CD8-positive, alpha-beta T cell (primary cell): ENCODE measurements at regions of chr12 and their contacts with region 1.

Region 1: DNA sequence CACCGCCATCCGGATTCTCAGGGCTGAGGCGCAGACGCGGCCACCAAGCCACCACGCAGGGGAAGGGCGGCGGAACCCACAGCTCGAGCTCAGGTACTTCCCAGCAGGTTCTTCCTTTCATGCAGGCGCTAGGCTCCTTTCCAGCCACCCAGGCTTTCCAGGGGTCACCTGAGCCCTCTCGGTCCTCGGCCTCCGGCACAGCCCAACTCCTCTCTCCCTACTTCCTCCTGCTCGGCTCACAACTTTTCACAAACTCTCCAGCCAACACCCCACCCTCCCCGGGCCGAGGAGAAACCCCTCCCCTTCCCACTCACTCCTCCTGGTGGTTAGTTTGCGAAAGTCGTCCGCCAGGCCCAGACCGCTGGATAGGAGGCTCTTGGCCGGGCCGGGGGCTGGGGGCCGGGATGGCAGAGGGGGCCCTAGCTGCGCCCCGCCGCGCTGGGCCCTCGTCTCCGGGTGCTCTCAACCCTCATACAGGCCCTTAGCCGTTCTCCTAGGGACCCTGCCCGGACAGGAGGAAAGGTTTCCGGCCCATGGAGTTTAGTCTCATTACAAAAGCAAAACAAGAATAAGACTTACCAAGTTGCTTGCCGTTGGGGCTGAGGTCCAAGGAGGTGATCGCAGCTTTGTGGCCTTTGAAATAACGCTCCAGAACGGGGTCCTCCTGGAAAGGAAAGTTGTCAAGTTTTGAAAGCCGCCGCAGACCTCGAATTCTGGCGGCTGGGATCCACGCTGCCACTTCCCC is at the start of gene GALNT4:
- DNase-seq: peak; percentile 45 to 88 (median 74)
- ATAC-seq: peak; percentile 70
- H3K4me3 ChIP-seq: peak within 1 kb of the TSS; percentile 78 to 93
- H3K4me3 Mint-ChIP-seq: peak within 1 kb of the TSS; percentile 92
- H3K27ac ChIP-seq: peak within 1 kb of the TSS; percentile 70 to 86
- H3K27ac Mint-ChIP-seq: peak within 1 kb of the TSS; percentile 87
- H3K4me1 ChIP-seq: peaks cover 28% of the 10 kb centered on the region
- H3K4me1 Mint-ChIP-seq: peaks cover 61% of the 10 kb centered on the region
- H3K27me3 ChIP-seq: no peaks in the 10 kb centered on the region
- H3K27me3 Mint-ChIP-seq: no peaks in the 10 kb centered on the region
- CTCF ChIP-seq: peak; percentile 41
- total RNA-seq, gene GALNT4: 4.6 to 5.3 TPM

Region 2: GRCh38 chr12:88035271-88035906 is 1489.3 kb before region 1 on chr12:
- CTCF ChIA-PET with region 1: no interaction called
- POLR2A ChIA-PET with region 1: no interaction called
- intact Hi-C with region 1: loop called (anchors 5 kb)
- DNase-seq: peak; percentile 65 to 91 (median 85)
- ATAC-seq: peak; percentile 97
- H3K4me3 ChIP-seq: peak overlapping the region; percentile 75 to 85
- H3K4me3 Mint-ChIP-seq: peak overlapping the region; percentile 96
- H3K27ac ChIP-seq: peak overlapping the region; percentile 67 to 73
- H3K27ac Mint-ChIP-seq: peak overlapping the region; percentile 96
- H3K4me1 ChIP-seq: peaks cover 23% of the 10 kb centered on the region
- H3K4me1 Mint-ChIP-seq: peaks cover 55% of the 10 kb centered on the region
- H3K27me3 ChIP-seq: no peaks in the 10 kb centered on the region
- H3K27me3 Mint-ChIP-seq: no peaks in the 10 kb centered on the region
- CTCF ChIP-seq: no peak

Region 3: GRCh38 chr12:88141770-88142609 is 1382.7 kb before region 1 on chr12 and contains the starts of genes CEP290 and TMTC3:
- CTCF ChIA-PET with region 1: no interaction called
- POLR2A ChIA-PET with region 1: interaction called, 3 read pairs
- intact Hi-C with region 1: loop called (anchors 1 to 5 kb)
- DNase-seq: peak; percentile 81 to 99 (median 90)
- ATAC-seq: peak; percentile 92
- H3K4me3 ChIP-seq: peak within 1 kb of the TSS; percentile 82 to 84
- H3K4me3 Mint-ChIP-seq: peak within 1 kb of the TSS; percentile 99
- H3K27ac ChIP-seq: peak within 1 kb of the TSS; percentile 75 to 85
- H3K27ac Mint-ChIP-seq: peak within 1 kb of the TSS; percentile 97
- H3K4me1 ChIP-seq: peaks cover 18% of the 10 kb centered on the region
- H3K4me1 Mint-ChIP-seq: peaks cover 48% of the 10 kb centered on the region
- H3K27me3 ChIP-seq: no peaks in the 10 kb centered on the region
- H3K27me3 Mint-ChIP-seq: no peaks in the 10 kb centered on the region
- CTCF ChIP-seq: no peak
- total RNA-seq, gene CEP290: 7.7 to 10.7 TPM
- total RNA-seq, gene TMTC3: 3.9 to 4.4 TPM

Region 4: GRCh38 chr12:88753066-88753465 is 771.6 kb before region 1 on chr12:
- CTCF ChIA-PET with region 1: no interaction called
- POLR2A ChIA-PET with region 1: no interaction called
- intact Hi-C with region 1: no loop called
- DNase-seq: no peak
- ATAC-seq: no peak
- H3K4me3 ChIP-seq: no peak overlapping the region
- H3K4me3 Mint-ChIP-seq: no peak overlapping the region
- H3K27ac ChIP-seq: no peak overlapping the region
- H3K27ac Mint-ChIP-seq: no peak overlapping the region
- H3K4me1 ChIP-seq: no peaks in the 10 kb centered on the region
- H3K4me1 Mint-ChIP-seq: no peaks in the 10 kb centered on the region
- H3K27me3 ChIP-seq: no peaks in the 10 kb centered on the region
- H3K27me3 Mint-ChIP-seq: no peaks in the 10 kb centered on the region
- CTCF ChIP-seq: no peak

Region 5: DNA sequence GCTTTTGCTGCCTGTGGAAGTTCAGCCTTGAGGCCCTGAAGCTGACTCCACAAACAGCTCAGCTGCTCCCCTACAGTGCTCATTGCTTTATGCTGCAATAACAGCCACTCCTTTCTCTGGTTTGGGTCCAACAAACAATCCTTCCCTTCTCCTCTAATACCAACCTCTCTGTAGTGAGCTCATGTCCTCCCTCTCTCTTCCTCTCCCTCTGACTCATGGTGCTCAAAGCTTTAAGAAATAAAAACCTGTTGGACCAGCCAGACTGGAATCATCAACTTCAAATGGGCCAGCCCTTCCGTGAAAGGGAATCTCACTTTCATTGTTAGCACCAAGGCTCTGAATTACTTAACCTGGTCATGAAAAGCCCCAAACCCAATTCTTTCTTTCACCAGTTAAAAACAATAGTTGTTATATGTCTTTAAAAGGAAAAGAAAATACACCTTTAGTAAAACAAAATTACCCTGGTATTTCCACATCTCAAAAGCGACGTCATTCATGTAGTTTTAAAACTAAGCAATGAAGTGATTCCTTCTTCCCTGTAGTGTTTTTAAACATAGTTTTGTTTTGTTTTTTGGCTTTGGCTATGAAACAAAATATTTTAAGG is 298.8 kb before region 1 on chr12:
- CTCF ChIA-PET with region 1: no interaction called
- POLR2A ChIA-PET with region 1: no interaction called
- intact Hi-C with region 1: loop called in 1 of 2 experiments (anchors 10 kb)
- DNase-seq: peak in 2 of 9 experiments; percentile 13 to 20
- ATAC-seq: peak; percentile 8
- H3K4me3 ChIP-seq: no peak overlapping the region
- H3K4me3 Mint-ChIP-seq: peak overlapping the region; percentile 24
- H3K27ac ChIP-seq: peak overlapping the region in 1 of 2 experiments; percentile 18
- H3K27ac Mint-ChIP-seq: no peak overlapping the region
- H3K4me1 ChIP-seq: peaks cover 13% of the 10 kb centered on the region
- H3K4me1 Mint-ChIP-seq: peaks cover 17% of the 10 kb centered on the region
- H3K27me3 ChIP-seq: no peaks in the 10 kb centered on the region
- H3K27me3 Mint-ChIP-seq: peaks cover 3% of the 10 kb centered on the region
- CTCF ChIP-seq: no peak

Region 6: DNA sequence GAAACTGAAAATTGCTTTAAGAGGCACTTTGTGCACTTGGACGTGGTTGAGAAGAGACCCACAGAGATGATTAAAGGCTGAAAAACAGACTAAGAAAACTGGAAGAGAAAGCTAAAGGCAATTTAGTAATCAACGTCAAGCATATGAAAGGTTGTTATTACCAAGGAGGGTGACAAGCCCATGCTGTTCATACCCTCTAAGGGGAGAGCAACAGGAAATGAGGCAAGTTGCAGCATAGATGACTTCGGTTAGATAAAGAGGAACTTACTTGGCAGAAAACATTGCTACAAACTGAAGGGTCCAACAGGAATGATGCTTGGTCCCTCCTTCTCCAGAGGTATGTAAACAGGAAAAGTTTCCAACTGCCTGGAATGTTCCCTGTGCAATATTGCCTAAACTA is 280.2 kb before region 1 on chr12:
- CTCF ChIA-PET with region 1: interaction called, 5 read pairs
- POLR2A ChIA-PET with region 1: interaction called, 5 read pairs
- intact Hi-C with region 1: loop called in 1 of 2 experiments (anchors 10 kb)
- DNase-seq: peak in 4 of 9 experiments; percentile 4 to 54 (median 23)
- ATAC-seq: peak; percentile 70
- H3K4me3 ChIP-seq: peak overlapping the region in 1 of 2 experiments; percentile 5
- H3K4me3 Mint-ChIP-seq: peak overlapping the region; percentile 61
- H3K27ac ChIP-seq: no peak overlapping the region
- H3K27ac Mint-ChIP-seq: peak overlapping the region; percentile 75
- H3K4me1 ChIP-seq: peaks cover 29% of the 10 kb centered on the region
- H3K4me1 Mint-ChIP-seq: peaks cover 32% of the 10 kb centered on the region
- H3K27me3 ChIP-seq: no peaks in the 10 kb centered on the region
- H3K27me3 Mint-ChIP-seq: peaks cover 8% of the 10 kb centered on the region
- CTCF ChIP-seq: no peak